Cardiac septum (tissue), 1 donor: ENCODE measurements at regions of chr5 and their contacts with region 1.

Region 1: GRCh38 chr5:68460147-68460798 is 244.7 kb downstream of the PIK3R1 start:
- DNase-seq: no peak

Region 2: DNA sequence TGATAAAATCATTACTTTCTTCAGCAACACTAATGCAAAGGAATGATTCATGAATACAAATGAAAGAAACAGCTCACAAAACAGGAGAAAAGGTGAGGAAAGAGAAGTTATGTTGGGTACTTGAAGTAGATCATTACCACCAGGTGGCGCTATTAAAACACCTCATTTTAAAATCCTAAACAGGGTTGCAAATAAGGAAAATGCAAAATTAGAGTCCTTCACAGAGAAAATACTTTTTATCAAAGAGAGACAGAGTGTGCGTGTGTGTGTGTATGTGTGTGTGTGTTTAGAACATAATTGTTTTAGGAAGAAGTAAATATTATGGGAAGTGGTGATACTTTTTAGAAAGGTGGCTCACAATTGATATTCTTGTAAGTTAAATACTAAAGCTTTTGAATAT is 1214.2 kb before region 1 on chr5:
- intact Hi-C with region 1: loop called (anchors 10 kb)
- DNase-seq: no peak

Region 3: GRCh38 chr5:68196876-68197275 is 263.4 kb before region 1 on chr5:
- intact Hi-C with region 1: no loop called
- DNase-seq: no peak

Region 4: GRCh38 chr5:68382640-68383039 is 77.6 kb before region 1 on chr5:
- intact Hi-C with region 1: no loop called
- DNase-seq: no peak

Region 5: DNA sequence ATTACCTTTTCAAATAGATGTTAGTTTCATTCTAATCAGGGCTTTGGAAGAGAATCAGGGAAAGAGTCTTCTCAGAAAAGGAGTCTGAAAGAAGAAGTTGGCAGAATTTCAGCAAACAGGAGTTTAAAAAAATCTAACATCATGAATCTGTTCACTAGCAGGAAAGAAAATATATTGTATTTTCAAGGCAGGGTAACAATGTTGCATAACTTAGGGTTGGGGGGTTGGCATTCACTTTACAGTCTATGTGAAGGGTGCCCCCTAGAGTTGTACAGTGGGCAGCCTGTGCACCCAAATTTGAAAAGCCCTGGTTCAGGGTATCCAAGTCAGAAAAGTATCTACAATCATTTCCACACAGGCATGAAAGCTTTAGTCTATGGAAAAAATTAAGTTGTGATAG is 285.2 kb after region 1 on chr5:
- intact Hi-C with region 1: loop called (anchors 10 kb)
- DNase-seq: no peak

Region 6: DNA sequence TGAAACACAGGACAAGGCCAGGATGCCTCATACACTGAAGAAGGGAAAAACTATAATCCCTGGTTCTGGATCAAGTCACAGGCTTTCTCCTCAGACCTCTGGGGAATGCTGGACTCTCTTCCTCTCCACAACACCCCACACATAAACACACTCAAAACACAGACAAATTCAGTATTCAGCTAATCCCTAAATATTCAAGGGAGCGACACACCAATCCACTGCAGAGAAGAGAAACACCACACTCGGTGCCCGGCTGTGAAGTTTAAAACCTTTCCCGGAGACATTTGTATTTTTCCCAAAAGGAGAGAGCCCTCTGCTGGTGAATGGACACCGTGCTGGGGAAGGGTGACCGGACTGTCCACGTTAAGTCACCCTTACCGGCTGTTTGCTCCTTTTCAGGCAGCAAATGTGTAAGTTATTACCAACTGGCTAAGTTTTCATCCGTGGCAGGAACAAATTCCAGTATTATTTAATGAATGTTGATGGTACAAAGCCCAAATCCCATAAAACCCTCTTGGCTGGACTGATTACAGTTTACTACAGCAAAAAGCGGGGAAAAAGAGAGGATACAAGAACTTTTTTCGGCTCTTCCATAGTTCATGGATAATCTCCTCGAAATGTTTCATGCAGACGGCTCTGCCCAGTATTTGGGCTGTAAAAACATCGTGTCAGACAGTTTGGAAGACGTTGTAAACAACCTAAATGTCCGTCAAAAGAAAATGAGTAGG is 502.6 kb after region 1 on chr5:
- intact Hi-C with region 1: loop called (anchors 5 kb)
- DNase-seq: no peak

Region 7: GRCh38 chr5:69007726-69008368 is 547.6 kb after region 1 on chr5:
- intact Hi-C with region 1: loop called (anchors 1 kb)
- DNase-seq: no peak